GM18951 (cell line): ENCODE measurements at regions of chr9 and their contacts with region 1.

Region 1: GRCh38 chr9:117644133-117644931 is 59.9 kb upstream of the TLR4 start:
- POLR2A ChIP-seq: no peak

Region 2: GRCh38 chr9:118281772-118282171 is 637.4 kb after region 1 on chr9:
- in situ Hi-C with region 1: loop called (anchors 25 kb)
- POLR2A ChIP-seq: no peak